ENCODE measurements at regions of chr17 and their contacts with region 1.

Region 1: DNA sequence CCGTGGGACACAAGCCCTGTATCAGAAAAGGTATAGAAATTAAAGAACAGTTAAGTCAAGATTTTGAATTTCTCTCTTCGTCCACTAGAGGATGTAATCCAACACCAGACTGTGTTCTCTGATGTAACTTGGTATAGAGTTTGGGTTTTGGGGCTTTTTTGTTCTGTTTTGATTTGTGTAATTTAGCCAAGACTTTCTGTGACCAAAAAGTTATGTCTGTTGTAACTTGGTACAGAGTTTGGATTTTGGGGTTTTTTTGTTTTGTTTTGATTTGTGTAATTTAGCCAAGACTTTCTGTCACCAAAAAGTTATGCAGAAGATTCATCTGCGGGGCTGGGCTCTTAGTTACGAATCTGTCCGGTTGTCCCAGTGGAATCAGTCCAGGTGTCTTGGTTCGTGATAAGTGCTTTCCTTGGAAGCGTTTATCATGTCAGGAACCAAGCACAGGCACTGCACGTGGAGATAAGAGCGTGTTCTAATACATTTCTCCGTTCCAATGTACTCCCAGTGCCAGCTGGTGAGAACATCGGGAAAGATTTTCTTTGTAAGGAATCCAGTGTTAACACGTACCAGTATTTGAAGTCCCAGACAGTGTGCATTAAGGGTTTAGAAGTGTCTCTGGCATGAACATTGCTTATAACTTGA is 44.1 kb upstream of the SEC14L1 start:
- DNase-seq: peak in 1 of 2 donors; percentile 55
- H3K4me3 ChIP-seq: no peak overlapping the region
- H3K27ac ChIP-seq: peak overlapping the region; percentile 61 to 69
- H3K4me1 ChIP-seq: peaks cover 0 to 41% (median 31%) of the 10 kb centered on the region in 4 donors
- H3K27me3 ChIP-seq: no peaks in the 10 kb centered on the region
- CTCF ChIP-seq: peak; percentile 72 to 84

Region 2: GRCh38 chr17:76585818-76586593 is 510.7 kb before region 1 on chr17 and contains the start of gene ST6GALNAC2:
- intact Hi-C with region 1: no loop called
- DNase-seq: peak; percentile 41 to 73
- H3K4me3 ChIP-seq: peak within 1 kb of the TSS; percentile 46 to 63
- H3K27ac ChIP-seq: no peak within 1 kb of the TSS
- H3K4me1 ChIP-seq: peaks cover 4 to 25% (median 19%) of the 10 kb centered on the region in 4 donors
- H3K27me3 ChIP-seq: peaks cover 0 to 55% of the 10 kb centered on the region in 2 donors
- CTCF ChIP-seq: peak in 1 of 2 experiments; percentile 31

Region 3: DNA sequence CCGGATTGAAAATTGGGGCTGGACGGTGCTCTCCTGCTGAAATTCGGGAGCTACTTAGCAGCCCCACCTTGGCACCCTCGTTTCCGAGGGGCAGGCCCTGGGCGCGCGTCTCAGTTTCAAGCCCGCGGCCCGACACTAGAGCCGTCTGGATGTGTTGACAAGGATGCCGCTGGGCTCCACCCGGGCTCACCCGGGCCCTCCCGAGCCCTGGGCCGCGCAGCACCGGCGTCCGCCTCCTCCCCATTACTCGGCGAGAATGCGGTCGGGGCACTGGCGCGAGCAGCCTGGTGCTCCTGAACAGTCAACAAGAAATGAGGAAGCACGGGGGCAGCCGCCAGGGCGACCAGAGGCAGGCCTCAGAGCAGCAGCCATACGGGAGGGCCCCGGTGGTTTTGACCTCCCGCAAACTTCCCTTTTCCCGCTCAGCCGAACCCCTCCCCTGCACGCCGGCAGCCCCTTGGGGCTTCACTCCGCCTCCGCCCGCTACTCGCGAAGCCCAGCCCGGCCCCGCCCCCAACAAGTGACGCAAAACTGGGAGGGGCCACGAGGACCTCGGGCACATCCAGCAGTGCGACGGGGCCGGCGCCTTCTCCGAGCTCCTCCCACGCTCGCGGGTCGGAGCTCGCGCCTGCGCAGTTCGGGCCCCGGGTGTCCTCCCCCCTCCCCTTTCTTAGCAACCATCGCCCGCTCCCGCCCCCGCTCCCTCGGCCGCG is 43.6 kb after region 1 on chr17:
- intact Hi-C with region 1: loop called (anchors 5 kb)
- DNase-seq: peak; percentile 98 to 100
- H3K4me3 ChIP-seq: peak overlapping the region; percentile 86 to 95
- H3K27ac ChIP-seq: peak overlapping the region; percentile 95 to 97
- H3K4me1 ChIP-seq: peaks cover 0 to 22% (median 13%) of the 10 kb centered on the region in 4 donors
- H3K27me3 ChIP-seq: no peaks in the 10 kb centered on the region
- CTCF ChIP-seq: no peak

Region 4: GRCh38 chr17:77494664-77495435 is 398.2 kb after region 1 on chr17:
- intact Hi-C with region 1: loop called (anchors 10 kb)
- DNase-seq: peak; percentile 86 to 87
- H3K4me3 ChIP-seq: no peak overlapping the region
- H3K27ac ChIP-seq: no peak overlapping the region
- H3K4me1 ChIP-seq: peaks cover 5 to 19% (median 15%) of the 10 kb centered on the region in 4 donors
- H3K27me3 ChIP-seq: no peaks in the 10 kb centered on the region
- CTCF ChIP-seq: peak; percentile 97 to 99